ENCODE measurements at regions of chr9 and their contacts with region 1.

Region 1: GRCh38 chr9:127943731-127944144 is 6.1 kb upstream of the DPM2 start:
- DNase-seq: peak; percentile 84 to 88
- ATAC-seq: peak; percentile 81

Region 2: DNA sequence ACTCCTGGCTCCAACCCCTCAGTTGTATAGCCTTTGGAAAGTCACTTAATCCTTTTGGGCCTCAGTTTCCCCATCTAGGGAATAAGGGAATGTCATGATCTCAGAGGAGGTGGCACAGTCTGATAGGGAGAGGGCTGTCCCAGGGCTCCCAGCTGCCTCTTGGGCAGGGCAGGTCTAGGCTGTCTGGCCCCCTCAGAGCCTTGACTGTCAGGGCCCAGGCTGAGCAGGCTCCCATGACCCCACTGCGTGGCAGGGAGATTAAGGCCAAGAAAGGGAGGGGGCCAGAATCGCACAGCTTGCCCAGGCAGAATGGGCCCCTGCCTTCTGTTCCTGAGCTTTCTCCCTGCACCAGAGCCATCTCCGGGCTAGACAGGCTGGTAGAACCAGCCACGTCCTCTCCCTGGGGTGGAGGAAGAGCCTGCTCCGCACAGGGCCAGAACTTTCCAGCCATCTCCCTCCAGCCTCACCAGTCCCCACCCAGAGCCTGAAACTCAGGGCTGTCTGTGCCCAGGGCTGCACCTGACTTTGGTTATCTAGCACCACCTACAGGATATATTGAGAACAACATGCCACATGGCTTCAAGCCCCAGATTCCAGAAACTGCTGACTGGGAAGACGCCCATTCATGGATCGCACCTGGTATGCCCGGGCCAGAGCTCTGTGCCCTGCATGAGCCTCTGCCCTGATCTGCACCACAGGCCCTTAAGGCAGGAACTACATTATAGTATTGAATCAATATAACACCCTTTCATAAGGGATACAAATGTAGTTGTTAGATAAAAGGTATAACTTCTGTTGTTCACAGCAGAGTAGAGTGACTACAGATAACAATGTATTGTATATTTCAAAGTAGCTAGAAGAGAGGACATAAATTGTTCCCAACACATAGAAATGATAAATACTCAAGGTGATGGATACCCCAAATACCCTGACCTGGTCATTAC is 91.4 kb after region 1 on chr9:
- intact Hi-C with region 1: loop called (anchors 2 to 5 kb)
- DNase-seq: peak; percentile 60 to 75
- ATAC-seq: peak; percentile 86

Measured in left colon (tissue), 2 donors.